Gastrocnemius medialis (tissue), 4 donors: ENCODE measurements at regions of chr1 and their contacts with region 1.

Region 1: GRCh38 chr1:45011837-45012638 is at the start of gene UROD:
- DNase-seq: peak; percentile 88 to 93
- ATAC-seq: peak; percentile 86 to 90
- H3K4me3 ChIP-seq: peak within 1 kb of the TSS; percentile 75 to 99 (median 92)
- H3K27ac ChIP-seq: peak within 1 kb of the TSS; percentile 88 to 96 (median 92)
- H3K4me1 ChIP-seq: peaks cover 39 to 44% of the 10 kb centered on the region in 2 donors
- H3K27me3 ChIP-seq: no peaks in the 10 kb centered on the region
- CTCF ChIP-seq: no peak
- POLR2A ChIP-seq: peak; percentile 34 to 75
- total RNA-seq, gene UROD: 42.6 to 68.8 (median 61.7) TPM

Region 2: GRCh38 chr1:44786138-44786840 is 225.7 kb before region 1 on chr1:
- in situ Hi-C with region 1: no loop called
- intact Hi-C with region 1: loop called (anchors 5 kb)
- DNase-seq: peak in 1 of 2 donors; percentile 66
- ATAC-seq: peak; percentile 68 to 87
- H3K4me3 ChIP-seq: peak overlapping the region; percentile 62 to 72 (median 64)
- H3K27ac ChIP-seq: peak overlapping the region; percentile 44 to 64 (median 55)
- H3K4me1 ChIP-seq: peaks cover 19 to 28% of the 10 kb centered on the region in 2 donors
- H3K27me3 ChIP-seq: no peaks in the 10 kb centered on the region
- CTCF ChIP-seq: peak; percentile 98 to 100 (median 99)
- POLR2A ChIP-seq: no peak

Region 3: GRCh38 chr1:44985747-44986359 is 26.2 kb before region 1 on chr1:
- in situ Hi-C with region 1: no loop called
- intact Hi-C with region 1: loop called (anchors 1 kb)
- DNase-seq: no peak
- ATAC-seq: peak; percentile 83 to 86
- H3K4me3 ChIP-seq: peak overlapping the region; percentile 64 to 85 (median 81)
- H3K27ac ChIP-seq: peak overlapping the region; percentile 81 to 96 (median 88)
- H3K4me1 ChIP-seq: peaks cover 24 to 28% of the 10 kb centered on the region in 2 donors
- H3K27me3 ChIP-seq: no peaks in the 10 kb centered on the region
- CTCF ChIP-seq: no peak
- POLR2A ChIP-seq: no peak

Region 4: DNA sequence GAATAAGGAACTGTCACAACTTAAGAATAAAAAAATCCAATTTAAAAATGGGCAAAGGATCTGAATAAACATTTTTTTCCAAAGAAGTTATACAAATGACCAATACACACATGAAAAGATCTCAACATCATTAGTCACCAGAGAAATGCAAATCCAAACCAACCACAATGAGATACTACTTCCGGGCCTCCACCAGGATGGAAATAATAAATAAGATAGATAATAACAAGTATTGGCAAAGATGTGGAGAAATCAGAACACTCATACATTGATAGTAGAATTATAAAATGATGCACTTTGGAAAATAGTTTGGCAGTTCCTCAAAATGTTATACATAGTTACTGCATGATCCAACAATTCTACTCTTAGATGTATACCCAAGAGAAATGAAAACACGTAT is 175.7 kb after region 1 on chr1:
- in situ Hi-C with region 1: no loop called
- intact Hi-C with region 1: no loop called
- DNase-seq: no peak
- ATAC-seq: no peak
- H3K4me3 ChIP-seq: no peak overlapping the region
- H3K27ac ChIP-seq: no peak overlapping the region
- H3K4me1 ChIP-seq: no peaks in the 10 kb centered on the region
- H3K27me3 ChIP-seq: no peaks in the 10 kb centered on the region
- CTCF ChIP-seq: no peak
- POLR2A ChIP-seq: no peak

Region 5: DNA sequence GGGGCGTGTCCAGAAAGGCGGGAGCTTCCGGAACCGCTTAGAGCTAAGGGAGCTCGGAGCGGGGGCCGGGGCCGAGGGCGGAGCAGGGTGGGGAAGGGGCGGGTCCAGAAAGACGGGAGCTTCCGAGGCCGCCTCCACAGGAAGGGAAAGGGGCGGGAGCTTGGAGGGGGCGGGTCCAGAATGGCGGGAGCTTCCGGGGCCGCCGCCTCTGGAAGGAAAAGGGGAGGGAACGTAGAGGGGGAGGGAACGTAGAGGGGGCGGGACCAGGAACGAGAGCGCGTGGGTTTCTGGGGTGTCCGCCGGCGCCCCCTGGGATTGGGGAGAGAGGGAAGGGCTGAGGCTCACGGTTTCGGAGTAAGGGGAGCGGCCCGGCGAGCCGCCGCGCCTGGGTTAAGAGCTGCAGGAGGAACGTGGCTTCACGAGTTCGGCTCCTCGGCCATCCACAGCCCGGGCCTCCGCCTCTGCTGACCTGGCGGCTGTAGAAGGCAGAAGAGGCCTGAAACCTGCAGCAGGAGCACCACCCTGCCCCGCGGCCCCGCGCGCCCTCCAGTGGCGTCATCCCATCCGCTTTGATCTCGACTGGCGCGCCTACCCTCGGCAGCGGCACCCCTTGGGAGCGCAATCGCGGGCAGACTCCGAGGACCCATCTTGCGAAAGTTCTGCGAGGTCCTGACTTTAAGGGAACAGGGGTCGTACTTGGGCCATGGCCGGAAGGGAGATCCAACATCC is 291.7 kb after region 1 on chr1:
- in situ Hi-C with region 1: loop called (anchors 5 kb)
- intact Hi-C with region 1: loop called (anchors 1 kb)
- DNase-seq: peak; percentile 98 to 99
- ATAC-seq: peak; percentile 90 to 95
- H3K4me3 ChIP-seq: peak overlapping the region; percentile 77 to 91 (median 82)
- H3K27ac ChIP-seq: peak overlapping the region; percentile 92 to 95 (median 94)
- H3K4me1 ChIP-seq: peaks cover 8 to 16% of the 10 kb centered on the region in 2 donors
- H3K27me3 ChIP-seq: no peaks in the 10 kb centered on the region
- CTCF ChIP-seq: peak; percentile 56 to 78 (median 75)
- POLR2A ChIP-seq: peak; percentile 60 to 67

Region 6: GRCh38 chr1:45550401-45551351 is 538.6 kb after region 1 on chr1 and contains the start of gene AKR1A1:
- in situ Hi-C with region 1: loop called in 2 of 4 experiments (anchors 10 to 25 kb)
- intact Hi-C with region 1: loop called (anchors 2 kb)
- DNase-seq: peak; percentile 72 to 82
- ATAC-seq: peak; percentile 96
- H3K4me3 ChIP-seq: peak within 1 kb of the TSS; percentile 71 to 90 (median 86)
- H3K27ac ChIP-seq: peak within 1 kb of the TSS; percentile 88 to 94 (median 93)
- H3K4me1 ChIP-seq: peaks cover 9 to 11% of the 10 kb centered on the region in 2 donors
- H3K27me3 ChIP-seq: no peaks in the 10 kb centered on the region
- CTCF ChIP-seq: peak in 3 of 5 experiments; percentile 5 to 25 (median 21)
- POLR2A ChIP-seq: peak; percentile 57 to 64
- total RNA-seq, gene AKR1A1: 15.6 to 40.1 (median 37.1) TPM